PC-9 (cell line): ENCODE measurements at regions of chr4 and their contacts with region 1.

Region 1: GRCh38 chr4:110165382-110166285 is 32.8 kb downstream of the ELOVL6 start:
- DNase-seq: peak in 1 of 2 experiments; percentile 86
- H3K4me3 ChIP-seq: no peak overlapping the region
- H3K27ac ChIP-seq: peak overlapping the region; percentile 98
- H3K4me1 ChIP-seq: peaks cover 55% of the 10 kb centered on the region
- H3K27me3 ChIP-seq: no peaks in the 10 kb centered on the region
- CTCF ChIP-seq: no peak

Region 2: GRCh38 chr4:110091434-110092140 is 74.0 kb before region 1 on chr4:
- CTCF ChIA-PET with region 1: no interaction called
- POLR2A ChIA-PET with region 1: no interaction called
- intact Hi-C with region 1: loop called (anchors 2 kb)
- DNase-seq: peak in 1 of 2 experiments; percentile 86
- H3K4me3 ChIP-seq: peak overlapping the region; percentile 41; the same call in 1 of the 2 replicates
- H3K27ac ChIP-seq: peak overlapping the region; percentile 90
- H3K4me1 ChIP-seq: peaks cover 64% of the 10 kb centered on the region
- H3K27me3 ChIP-seq: no peaks in the 10 kb centered on the region
- CTCF ChIP-seq: no peak